HepG2 (cell line): ENCODE measurements at regions of chr10 and their contacts with region 1.

Region 1: GRCh38 chr10:48976196-48976595 is 36.6 kb upstream of the LRRC18 start:
- DNase-seq: peak; percentile 6
- ATAC-seq: peak; percentile 67
- H3K4me3 ChIP-seq: no peak overlapping the region
- H3K27ac ChIP-seq: no peak overlapping the region
- H3K4me1 ChIP-seq: no peaks in the 10 kb centered on the region
- H3K27me3 ChIP-seq: no peaks in the 10 kb centered on the region; a peak in 1 of 5 replicates
- CTCF ChIP-seq: peak; percentile 35
- EP300 ChIP-seq: no peak
- POLR2A ChIP-seq: no peak
- RAD21 ChIP-seq: no peak

Region 2: DNA sequence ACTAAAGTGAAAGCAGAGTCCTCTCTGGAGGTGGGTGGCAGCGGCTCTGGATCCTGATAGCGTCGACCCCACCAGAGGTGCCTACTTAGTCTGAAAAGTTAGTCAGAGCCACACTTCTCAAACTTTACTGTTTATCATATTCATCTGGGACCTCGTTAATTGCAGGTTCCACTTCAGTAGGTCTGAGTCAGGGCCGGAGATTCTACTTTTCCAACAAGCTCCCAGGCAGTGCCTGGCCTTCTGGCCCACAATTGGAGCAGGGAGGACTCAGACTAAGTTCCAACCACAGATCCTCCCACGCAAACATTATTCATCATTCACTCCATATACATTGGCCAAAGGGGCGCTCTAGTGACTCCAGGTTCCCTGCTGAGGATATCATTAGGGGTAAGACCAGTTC is 61.0 kb after region 1 on chr10:
- CTCF ChIA-PET with region 1: no interaction called
- POLR2A ChIA-PET with region 1: no interaction called
- in situ Hi-C with region 1: no loop called
- intact Hi-C with region 1: no loop called
- DNase-seq: no peak
- ATAC-seq: no peak
- H3K4me3 ChIP-seq: no peak overlapping the region
- H3K27ac ChIP-seq: no peak overlapping the region
- H3K4me1 ChIP-seq: no peaks in the 10 kb centered on the region
- H3K27me3 ChIP-seq: no peaks in the 10 kb centered on the region
- CTCF ChIP-seq: no peak
- EP300 ChIP-seq: no peak
- POLR2A ChIP-seq: no peak
- RAD21 ChIP-seq: no peak

Region 3: GRCh38 chr10:49164559-49165188 is 188.5 kb after region 1 on chr10:
- CTCF ChIA-PET with region 1: no interaction called
- POLR2A ChIA-PET with region 1: no interaction called
- in situ Hi-C with region 1: loop called (anchors 5 kb)
- intact Hi-C with region 1: loop called (anchors 1 kb)
- DNase-seq: peak; percentile 28
- ATAC-seq: peak; percentile 92
- H3K4me3 ChIP-seq: no peak overlapping the region
- H3K27ac ChIP-seq: no peak overlapping the region
- H3K4me1 ChIP-seq: no peaks in the 10 kb centered on the region
- H3K27me3 ChIP-seq: no peaks in the 10 kb centered on the region; a peak in 1 of 5 replicates
- CTCF ChIP-seq: peak; percentile 69
- EP300 ChIP-seq: no peak
- POLR2A ChIP-seq: no peak
- RAD21 ChIP-seq: peak; percentile 51; the same call in 1 of the 2 replicates

Region 4: DNA sequence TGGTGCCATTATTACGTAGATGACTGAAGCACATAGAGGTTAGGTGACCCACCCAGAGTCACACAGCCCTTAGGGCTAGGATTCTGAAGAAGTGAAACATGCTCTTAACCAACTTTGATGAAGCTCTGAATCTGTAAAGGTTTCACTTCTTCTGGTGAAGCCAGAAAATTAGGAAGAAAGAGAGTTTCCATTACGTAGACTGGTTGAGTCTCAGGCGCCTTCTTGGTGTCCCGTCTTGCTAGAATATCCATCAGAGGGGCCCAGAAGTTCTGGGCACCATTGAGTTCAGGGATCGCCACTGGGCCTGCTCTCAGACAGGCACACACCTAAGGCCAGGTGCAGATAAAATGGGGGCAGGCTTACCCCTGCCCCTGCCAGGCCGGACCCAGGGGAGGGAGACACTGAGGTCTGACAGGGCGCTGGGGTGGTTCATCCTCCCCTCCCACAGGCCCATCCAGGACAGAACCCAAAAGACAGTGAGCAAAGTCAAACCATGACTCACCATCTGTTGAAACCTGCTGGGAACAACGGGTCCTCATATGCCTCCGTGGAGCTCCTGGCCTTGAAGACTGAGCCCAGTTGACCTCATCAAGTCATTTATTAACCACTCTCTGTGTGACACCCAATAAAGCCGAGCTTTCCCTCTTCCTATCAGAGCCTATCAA is 386.5 kb after region 1 on chr10:
- CTCF ChIA-PET with region 1: no interaction called
- POLR2A ChIA-PET with region 1: no interaction called
- in situ Hi-C with region 1: loop called (anchors 10 kb)
- intact Hi-C with region 1: no loop called
- DNase-seq: peak; percentile 87
- ATAC-seq: peak; percentile 89
- H3K4me3 ChIP-seq: no peak overlapping the region
- H3K27ac ChIP-seq: no peak overlapping the region
- H3K4me1 ChIP-seq: peaks cover 43% of the 10 kb centered on the region
- H3K27me3 ChIP-seq: no peaks in the 10 kb centered on the region; a peak in 1 of 5 replicates
- CTCF ChIP-seq: no peak
- EP300 ChIP-seq: peak in 1 of 2 experiments; percentile 45; a peak in 1 of 4 replicates
- POLR2A ChIP-seq: no peak
- RAD21 ChIP-seq: no peak

Region 5: GRCh38 chr10:49518982-49519578 is 542.9 kb after region 1 on chr10:
- CTCF ChIA-PET with region 1: no interaction called
- POLR2A ChIA-PET with region 1: no interaction called
- in situ Hi-C with region 1: loop called (anchors 10 kb)
- intact Hi-C with region 1: no loop called
- DNase-seq: peak; percentile 36
- ATAC-seq: peak; percentile 82
- H3K4me3 ChIP-seq: no peak overlapping the region
- H3K27ac ChIP-seq: no peak overlapping the region
- H3K4me1 ChIP-seq: peaks cover 12% of the 10 kb centered on the region
- H3K27me3 ChIP-seq: no peaks in the 10 kb centered on the region
- CTCF ChIP-seq: peak; percentile 73
- EP300 ChIP-seq: no peak
- POLR2A ChIP-seq: no peak
- RAD21 ChIP-seq: no peak; the same call in 1 of the 2 replicates